ENCODE measurements at regions of chr3 and their contacts with region 1.

Region 1: DNA sequence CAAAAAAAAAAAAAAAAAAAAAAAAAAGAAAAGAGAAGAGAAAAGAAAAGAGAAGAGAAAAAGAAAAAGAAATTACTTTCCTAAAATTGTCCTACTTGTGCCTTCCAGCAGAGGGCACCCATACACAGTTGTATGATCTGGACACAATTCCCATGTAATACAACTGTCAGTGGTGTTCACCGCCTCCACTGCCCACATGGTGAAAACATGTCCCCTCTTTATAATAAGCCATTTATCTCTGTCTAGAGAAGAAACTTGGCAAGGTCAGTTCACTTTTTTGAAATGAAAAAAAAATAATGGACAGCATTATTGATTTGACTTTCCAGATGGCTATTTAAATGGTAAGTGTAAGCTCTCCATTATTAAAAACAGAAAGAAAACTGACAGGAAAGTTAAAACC is 459.4 kb downstream of the GBE1 start:
- DNase-seq: peak; percentile 48
- H3K4me3 Mint-ChIP-seq: no peak overlapping the region
- H3K27ac Mint-ChIP-seq: no peak overlapping the region
- H3K4me1 Mint-ChIP-seq: peaks cover 22% of the 10 kb centered on the region
- H3K27me3 Mint-ChIP-seq: no peaks in the 10 kb centered on the region
- CTCF ChIP-seq: peak; percentile 36

Region 2: GRCh38 chr3:81338676-81339555 is 36.9 kb after region 1 on chr3:
- CTCF ChIA-PET with region 1: no interaction called
- intact Hi-C with region 1: loop called (anchors 2 kb)
- DNase-seq: no peak
- H3K4me3 Mint-ChIP-seq: no peak overlapping the region
- H3K27ac Mint-ChIP-seq: no peak overlapping the region
- H3K4me1 Mint-ChIP-seq: no peaks in the 10 kb centered on the region
- H3K27me3 Mint-ChIP-seq: no peaks in the 10 kb centered on the region
- CTCF ChIP-seq: no peak